CD8-positive, alpha-beta T cell (primary cell): ENCODE measurements at regions of chr6 and their contacts with region 1.

Region 1: GRCh38 chr6:110949679-110950285 is 8.7 kb upstream of the GTF3C6 start:
- DNase-seq: peak in 2 of 9 experiments; percentile 48 to 64
- ATAC-seq: peak; percentile 46
- H3K4me3 ChIP-seq: no peak overlapping the region
- H3K4me3 Mint-ChIP-seq: no peak overlapping the region
- H3K27ac ChIP-seq: no peak overlapping the region
- H3K27ac Mint-ChIP-seq: no peak overlapping the region
- H3K4me1 ChIP-seq: peaks cover 5% of the 10 kb centered on the region
- H3K4me1 Mint-ChIP-seq: peaks cover 4% of the 10 kb centered on the region
- H3K27me3 ChIP-seq: no peaks in the 10 kb centered on the region
- H3K27me3 Mint-ChIP-seq: peaks cover 5% of the 10 kb centered on the region
- CTCF ChIP-seq: peak; percentile 58

Region 2: GRCh38 chr6:110341663-110342596 is 607.9 kb before region 1 on chr6:
- CTCF ChIA-PET with region 1: no interaction called
- POLR2A ChIA-PET with region 1: no interaction called
- intact Hi-C with region 1: no loop called
- DNase-seq: no peak
- ATAC-seq: no peak
- H3K4me3 ChIP-seq: no peak overlapping the region
- H3K4me3 Mint-ChIP-seq: no peak overlapping the region
- H3K27ac ChIP-seq: no peak overlapping the region
- H3K27ac Mint-ChIP-seq: no peak overlapping the region
- H3K4me1 ChIP-seq: no peaks in the 10 kb centered on the region
- H3K4me1 Mint-ChIP-seq: no peaks in the 10 kb centered on the region
- H3K27me3 ChIP-seq: no peaks in the 10 kb centered on the region
- H3K27me3 Mint-ChIP-seq: no peaks in the 10 kb centered on the region
- CTCF ChIP-seq: no peak

Region 3: DNA sequence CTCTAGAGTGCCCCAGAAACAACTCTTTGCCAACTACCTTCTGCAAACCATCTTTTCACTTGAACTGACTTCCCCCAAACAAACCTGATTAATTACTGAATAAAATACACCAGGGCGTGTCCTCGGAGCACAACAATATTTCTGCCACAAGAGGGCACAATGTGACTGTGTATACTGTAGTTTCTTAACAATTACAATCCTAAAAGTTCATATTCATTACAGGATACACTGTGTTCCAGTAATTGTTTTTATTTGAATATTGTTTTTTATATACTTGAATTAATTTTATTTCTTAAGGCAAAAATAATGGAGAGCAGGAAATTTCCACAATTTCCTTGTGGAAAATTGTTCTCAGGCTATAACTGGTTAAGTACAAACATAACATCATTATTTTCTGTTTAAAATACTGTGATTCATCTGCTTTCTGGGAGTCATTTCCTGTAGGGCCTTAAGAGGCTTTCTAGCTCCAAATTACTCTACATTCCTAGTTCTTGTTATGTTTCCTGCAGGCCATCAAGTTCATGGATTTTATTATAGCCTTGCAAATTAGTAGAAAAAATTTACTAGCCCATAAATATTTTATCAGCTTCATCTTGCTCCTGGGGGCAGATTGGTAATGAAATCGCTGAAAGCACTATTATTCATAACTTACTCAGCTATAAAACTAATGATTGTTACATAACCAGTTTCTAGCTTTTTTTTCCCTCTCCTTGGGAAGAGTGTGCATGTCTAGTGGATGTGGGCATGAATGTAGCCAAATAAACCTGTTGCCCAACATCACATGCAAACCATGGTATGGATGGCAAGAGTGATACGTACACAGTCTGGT is 421.5 kb before region 1 on chr6:
- CTCF ChIA-PET with region 1: interaction called, 41 read pairs
- POLR2A ChIA-PET with region 1: no interaction called
- intact Hi-C with region 1: loop called (anchors 1 kb)
- DNase-seq: peak in 7 of 9 experiments; percentile 22 to 75 (median 53)
- ATAC-seq: peak; percentile 56
- H3K4me3 ChIP-seq: no peak overlapping the region
- H3K4me3 Mint-ChIP-seq: no peak overlapping the region
- H3K27ac ChIP-seq: no peak overlapping the region
- H3K27ac Mint-ChIP-seq: no peak overlapping the region
- H3K4me1 ChIP-seq: no peaks in the 10 kb centered on the region
- H3K4me1 Mint-ChIP-seq: no peaks in the 10 kb centered on the region
- H3K27me3 ChIP-seq: no peaks in the 10 kb centered on the region
- H3K27me3 Mint-ChIP-seq: peaks cover 3% of the 10 kb centered on the region
- CTCF ChIP-seq: peak; percentile 87

Region 4: GRCh38 chr6:110882271-110882613 is 67.5 kb before region 1 on chr6:
- CTCF ChIA-PET with region 1: interaction called, 14 read pairs
- POLR2A ChIA-PET with region 1: no interaction called
- intact Hi-C with region 1: loop called in 1 of 2 experiments (anchors 5 kb)
- DNase-seq: no peak
- ATAC-seq: no peak
- H3K4me3 ChIP-seq: no peak overlapping the region
- H3K4me3 Mint-ChIP-seq: peak overlapping the region; percentile 8
- H3K27ac ChIP-seq: no peak overlapping the region
- H3K27ac Mint-ChIP-seq: peak overlapping the region; percentile 45
- H3K4me1 ChIP-seq: peaks cover 92% of the 10 kb centered on the region
- H3K4me1 Mint-ChIP-seq: peaks cover 93% of the 10 kb centered on the region
- H3K27me3 ChIP-seq: no peaks in the 10 kb centered on the region
- H3K27me3 Mint-ChIP-seq: no peaks in the 10 kb centered on the region
- CTCF ChIP-seq: no peak

Region 5: GRCh38 chr6:110939429-110940200 is 10.2 kb before region 1 on chr6:
- CTCF ChIA-PET with region 1: no interaction called
- POLR2A ChIA-PET with region 1: no interaction called
- intact Hi-C with region 1: no loop called
- DNase-seq: no peak
- ATAC-seq: no peak
- H3K4me3 ChIP-seq: no peak overlapping the region
- H3K4me3 Mint-ChIP-seq: no peak overlapping the region
- H3K27ac ChIP-seq: no peak overlapping the region
- H3K27ac Mint-ChIP-seq: no peak overlapping the region
- H3K4me1 ChIP-seq: no peaks in the 10 kb centered on the region
- H3K4me1 Mint-ChIP-seq: no peaks in the 10 kb centered on the region
- H3K27me3 ChIP-seq: no peaks in the 10 kb centered on the region
- H3K27me3 Mint-ChIP-seq: peaks cover 2% of the 10 kb centered on the region
- CTCF ChIP-seq: no peak